ENCODE measurements at regions of chr19 and their contacts with region 1.

Region 1: DNA sequence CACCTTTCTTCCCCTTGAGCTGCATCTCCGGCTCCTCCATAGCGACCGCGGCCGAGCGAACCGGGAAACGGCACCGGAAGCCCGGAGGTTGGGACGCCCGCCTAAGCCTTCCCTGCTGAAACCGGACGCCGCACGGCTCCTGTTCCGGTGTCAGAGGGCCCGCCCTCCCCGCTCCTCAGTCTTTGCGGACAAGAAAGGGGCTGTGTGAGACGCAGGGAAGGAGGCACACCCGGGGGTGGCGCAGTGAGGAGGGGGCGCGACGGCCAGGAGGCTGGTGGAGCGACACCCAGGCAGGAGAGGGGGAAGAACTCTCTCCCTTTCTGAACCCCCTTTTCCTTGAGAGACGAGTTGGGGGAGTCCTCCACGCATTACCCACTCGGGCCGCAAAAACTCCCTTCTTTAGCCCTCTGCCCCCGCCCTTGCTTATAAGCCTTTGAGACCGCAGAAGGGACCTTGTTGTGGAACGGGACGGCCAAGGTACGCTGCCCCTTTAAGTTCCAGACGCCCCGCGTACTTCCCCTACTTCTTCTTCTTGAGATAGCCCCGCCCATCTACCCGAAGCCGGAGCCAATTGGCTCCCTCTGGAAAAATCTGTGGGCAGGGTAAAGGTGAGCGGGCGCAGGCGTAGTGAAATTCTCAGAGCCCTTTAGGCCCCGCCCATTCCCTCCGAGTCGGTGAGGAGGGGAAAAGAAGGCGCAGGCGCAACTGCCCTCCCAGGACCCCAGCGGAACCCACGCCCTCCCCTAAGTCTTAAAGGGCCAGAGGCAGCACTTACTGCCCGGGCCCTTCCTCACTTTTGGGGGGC is at the starts of genes BORCS8 and RFXANK:
- DNase-seq: peak; percentile 97 to 99 (median 99)
- H3K4me3 ChIP-seq: peak within 1 kb of the TSS; percentile 98 to 100
- H3K4me3 Mint-ChIP-seq: peak within 1 kb of the TSS; percentile 95 to 99 (median 98)
- H3K27ac ChIP-seq: peak within 1 kb of the TSS; percentile 100
- H3K27ac Mint-ChIP-seq: peak within 1 kb of the TSS; percentile 98 to 100 (median 99)
- H3K4me1 ChIP-seq: peaks cover 44% of the 10 kb centered on the region
- H3K4me1 Mint-ChIP-seq: peaks cover 18 to 55% (median 37%) of the 10 kb centered on the region in 4 donors
- H3K27me3 ChIP-seq: no peaks in the 10 kb centered on the region
- H3K27me3 Mint-ChIP-seq: no peaks in the 10 kb centered on the region
- total RNA-seq, gene BORCS8: 36.0 to 41.2 TPM
- total RNA-seq, gene RFXANK: 69.5 to 77.2 TPM

Region 2: GRCh38 chr19:18636183-18636968 is 555.9 kb before region 1 on chr19:
- CTCF ChIA-PET with region 1: no interaction called
- POLR2A ChIA-PET with region 1: no interaction called
- intact Hi-C with region 1: no loop called
- DNase-seq: peak; percentile 97 to 99 (median 99)
- H3K4me3 ChIP-seq: peak overlapping the region; percentile 47 to 82
- H3K4me3 Mint-ChIP-seq: peak overlapping the region; percentile 84 to 90 (median 88)
- H3K27ac ChIP-seq: peak overlapping the region; percentile 84
- H3K27ac Mint-ChIP-seq: peak overlapping the region; percentile 77 to 96 (median 94)
- H3K4me1 ChIP-seq: peaks cover 24% of the 10 kb centered on the region
- H3K4me1 Mint-ChIP-seq: peaks cover 20 to 45% (median 33%) of the 10 kb centered on the region in 4 donors
- H3K27me3 ChIP-seq: no peaks in the 10 kb centered on the region
- H3K27me3 Mint-ChIP-seq: peaks cover 0 to 2% of the 10 kb centered on the region in 2 donors

Region 3: DNA sequence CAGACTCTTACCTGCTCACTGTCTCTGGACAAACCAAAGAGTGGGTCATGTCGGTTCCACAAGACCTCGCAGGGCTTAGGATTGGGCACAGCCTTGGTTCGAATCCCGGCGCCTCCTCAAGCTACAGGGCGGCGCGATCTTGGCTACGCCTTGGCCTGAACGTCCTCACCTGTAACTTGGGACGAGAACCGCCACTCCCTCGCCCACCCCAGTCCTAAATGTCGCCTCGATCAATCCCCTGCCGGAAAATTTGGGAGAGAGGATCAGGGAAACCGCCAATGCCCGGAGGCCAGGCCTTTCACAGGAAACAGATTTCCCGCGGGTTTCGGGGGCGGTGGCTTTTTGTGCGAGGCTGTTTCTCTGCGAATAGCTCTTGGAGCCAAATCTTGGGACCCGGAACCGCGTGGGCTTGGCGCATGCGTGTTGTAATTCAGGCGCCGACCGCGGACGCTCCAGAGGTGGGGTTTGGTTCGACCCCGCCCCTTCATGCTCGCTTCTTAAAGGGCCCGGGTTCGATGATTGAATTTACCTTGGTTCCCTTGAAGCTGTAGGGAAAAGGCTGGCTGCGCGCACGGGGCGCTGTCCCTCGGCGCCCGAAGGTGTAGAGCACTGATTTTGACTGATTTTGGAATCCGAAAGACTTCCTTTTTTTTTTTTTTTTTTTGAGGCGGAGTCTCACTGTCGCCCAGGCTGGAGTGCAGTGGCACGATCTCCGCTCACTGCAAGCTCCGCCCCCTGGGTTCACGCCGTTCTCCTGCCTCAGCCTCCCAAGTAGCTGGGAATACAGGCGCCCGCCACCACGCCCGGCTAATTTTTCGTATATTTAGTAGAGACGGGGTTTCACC is 11.0 kb after region 1 on chr19 and contains the start of gene NR2C2AP:
- CTCF ChIA-PET with region 1: interaction called, 6 read pairs
- POLR2A ChIA-PET with region 1: interaction called, 84 read pairs
- intact Hi-C with region 1: loop called (anchors 1 kb)
- DNase-seq: peak; percentile 89 to 91 (median 90)
- H3K4me3 ChIP-seq: peak within 1 kb of the TSS; percentile 69 to 93
- H3K4me3 Mint-ChIP-seq: peak within 1 kb of the TSS; percentile 91 to 97 (median 94)
- H3K27ac ChIP-seq: peak within 1 kb of the TSS; percentile 73
- H3K27ac Mint-ChIP-seq: peak within 1 kb of the TSS; percentile 90 to 96 (median 94)
- H3K4me1 ChIP-seq: peaks cover 33% of the 10 kb centered on the region
- H3K4me1 Mint-ChIP-seq: peaks cover 19 to 43% (median 35%) of the 10 kb centered on the region in 4 donors
- H3K27me3 ChIP-seq: no peaks in the 10 kb centered on the region
- H3K27me3 Mint-ChIP-seq: peaks cover 0 to 4% of the 10 kb centered on the region in 2 donors
- total RNA-seq, gene NR2C2AP: 25.1 to 28.6 TPM

Measured in CD4-positive, alpha-beta memory T cell (primary cell).